ENCODE measurements at regions of chr7 and their contacts with region 1.

Region 1: GRCh38 chr7:16564909-16565426 is 38.3 kb downstream of the LRRC72 start:
- DNase-seq: peak; percentile 15
- H3K4me3 ChIP-seq: no peak overlapping the region
- H3K27ac ChIP-seq: no peak overlapping the region
- H3K27me3 ChIP-seq: no peaks in the 10 kb centered on the region
- CTCF ChIP-seq: peak; percentile 79

Region 2: GRCh38 chr7:16071246-16071857 is 493.6 kb before region 1 on chr7:
- CTCF ChIA-PET with region 1: interaction called, 20 read pairs
- POLR2A ChIA-PET with region 1: no interaction called
- DNase-seq: peak; percentile 41
- H3K4me3 ChIP-seq: no peak overlapping the region
- H3K27ac ChIP-seq: no peak overlapping the region
- H3K27me3 ChIP-seq: no peaks in the 10 kb centered on the region
- CTCF ChIP-seq: peak; percentile 76

Region 3: DNA sequence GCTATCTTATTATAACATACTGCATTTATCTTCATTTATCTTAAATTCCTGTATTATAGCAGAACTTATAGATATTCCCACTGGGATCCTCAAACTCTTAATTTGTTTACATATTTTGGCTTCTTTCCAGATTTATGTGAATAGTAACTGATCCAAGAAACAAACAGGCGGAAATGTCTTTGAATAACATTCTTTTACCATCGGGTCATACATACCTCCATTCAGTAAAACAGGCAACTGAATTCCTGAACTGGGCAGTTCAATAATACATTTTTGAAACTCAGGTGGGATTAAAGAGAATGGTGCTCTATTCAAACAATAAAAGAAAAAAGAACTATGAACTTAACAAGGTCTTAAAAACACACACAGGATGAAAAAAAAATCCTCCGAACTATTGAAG is 481.0 kb before region 1 on chr7:
- CTCF ChIA-PET with region 1: interaction called, 153 read pairs
- POLR2A ChIA-PET with region 1: no interaction called
- DNase-seq: no peak
- H3K4me3 ChIP-seq: no peak overlapping the region
- H3K27ac ChIP-seq: no peak overlapping the region
- H3K27me3 ChIP-seq: no peaks in the 10 kb centered on the region
- CTCF ChIP-seq: no peak

Region 4: GRCh38 chr7:16098585-16099179 is 466.3 kb before region 1 on chr7:
- CTCF ChIA-PET with region 1: interaction called, 14 read pairs
- POLR2A ChIA-PET with region 1: no interaction called
- DNase-seq: no peak
- H3K4me3 ChIP-seq: no peak overlapping the region
- H3K27ac ChIP-seq: no peak overlapping the region
- H3K27me3 ChIP-seq: no peaks in the 10 kb centered on the region
- CTCF ChIP-seq: peak; percentile 88

Region 5: GRCh38 chr7:16129431-16130116 is 435.4 kb before region 1 on chr7:
- CTCF ChIA-PET with region 1: interaction called, 10 read pairs
- POLR2A ChIA-PET with region 1: no interaction called
- DNase-seq: peak; percentile 32
- H3K4me3 ChIP-seq: no peak overlapping the region
- H3K27ac ChIP-seq: no peak overlapping the region
- H3K27me3 ChIP-seq: no peaks in the 10 kb centered on the region
- CTCF ChIP-seq: no peak

Region 6: GRCh38 chr7:16531707-16532106 is 33.3 kb before region 1 on chr7:
- CTCF ChIA-PET with region 1: interaction called, 14 read pairs
- POLR2A ChIA-PET with region 1: no interaction called
- DNase-seq: no peak
- H3K4me3 ChIP-seq: no peak overlapping the region
- H3K27ac ChIP-seq: no peak overlapping the region
- H3K27me3 ChIP-seq: no peaks in the 10 kb centered on the region
- CTCF ChIP-seq: no peak

Region 7: GRCh38 chr7:16554518-16555236 is 10.3 kb before region 1 on chr7:
- CTCF ChIA-PET with region 1: interaction called, 44 read pairs
- POLR2A ChIA-PET with region 1: no interaction called
- DNase-seq: no peak
- H3K4me3 ChIP-seq: no peak overlapping the region
- H3K27ac ChIP-seq: no peak overlapping the region
- H3K27me3 ChIP-seq: peaks cover 2% of the 10 kb centered on the region
- CTCF ChIP-seq: no peak

Measured in AG04450 (cell line).